ENCODE measurements at regions of chr13 and their contacts with region 1.

Region 1: GRCh38 chr13:50801087-50801931 is 42.2 kb downstream of the DLEU7 start:
- DNase-seq: peak in 1 of 2 donors; percentile 26
- H3K4me3 ChIP-seq: no peak overlapping the region
- H3K27ac ChIP-seq: no peak overlapping the region
- H3K4me1 ChIP-seq: no peaks in the 10 kb centered on the region
- H3K27me3 ChIP-seq: no peaks in the 10 kb centered on the region
- CTCF ChIP-seq: peak; percentile 57 to 70 (median 63)
- POLR2A ChIP-seq: no peak

Region 2: GRCh38 chr13:51397262-51397941 is 596.1 kb after region 1 on chr13:
- intact Hi-C with region 1: loop called (anchors 5 kb)
- DNase-seq: peak in 1 of 2 donors; percentile 54
- H3K4me3 ChIP-seq: no peak overlapping the region
- H3K27ac ChIP-seq: peak overlapping the region; percentile 36 to 43
- H3K4me1 ChIP-seq: no peaks in the 10 kb centered on the region
- H3K27me3 ChIP-seq: no peaks in the 10 kb centered on the region
- CTCF ChIP-seq: no peak
- POLR2A ChIP-seq: no peak